ENCODE measurements at regions of chrX and their contacts with region 1.

Region 1: DNA sequence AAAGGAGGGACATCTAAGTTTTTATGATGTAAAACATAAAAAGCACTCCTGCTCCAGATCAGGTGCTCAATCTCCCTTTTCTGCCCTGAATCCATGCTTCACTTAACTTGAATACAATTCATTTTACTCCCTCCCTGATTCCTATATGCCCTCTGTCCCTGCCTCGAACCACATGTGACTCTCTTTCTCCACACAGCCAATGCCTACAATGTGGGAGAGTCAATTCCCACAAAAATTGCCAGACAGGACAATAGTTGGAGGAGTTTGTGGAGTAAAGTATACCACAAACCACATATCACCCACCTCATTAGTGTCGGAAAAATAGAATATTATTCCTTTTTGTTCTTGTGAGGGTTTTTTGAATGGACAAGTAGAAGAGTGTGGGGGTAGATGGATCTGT is 9.7 kb downstream of the AMMECR1 start:
- DNase-seq: no peak
- ATAC-seq: no peak
- H3K4me3 ChIP-seq: no peak overlapping the region
- H3K27ac ChIP-seq: no peak overlapping the region
- H3K4me1 ChIP-seq: peaks cover 8 to 21% of the 10 kb centered on the region in 2 experiments; a peak in 3 of 5 replicates
- H3K27me3 ChIP-seq: no peaks in the 10 kb centered on the region
- CTCF ChIP-seq: no peak
- EP300 ChIP-seq: no peak
- POLR2A ChIP-seq: no peak
- RAD21 ChIP-seq: no peak

Region 2: DNA sequence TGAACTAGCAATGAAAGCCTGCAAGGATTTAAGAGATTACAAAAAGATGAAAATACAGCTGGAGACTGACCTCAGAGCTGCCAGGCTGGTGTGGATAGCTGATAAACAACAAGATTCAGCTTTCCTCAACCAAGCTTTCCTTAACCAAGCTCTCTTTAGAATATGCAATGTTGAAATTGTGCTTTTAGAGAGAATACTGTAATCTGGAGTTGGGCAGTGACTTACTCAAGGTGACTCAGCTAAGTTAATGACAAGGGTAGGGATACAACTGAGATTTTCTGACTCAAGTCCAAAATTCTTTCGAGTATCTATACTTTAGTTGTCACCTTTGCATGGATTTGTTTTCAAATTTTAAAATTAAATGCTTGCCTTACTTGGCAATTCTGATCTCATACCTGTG is 88.3 kb before region 1 on chrX:
- CTCF ChIA-PET with region 1: no interaction called
- POLR2A ChIA-PET with region 1: no interaction called
- in situ Hi-C with region 1: loop called (anchors 5 kb)
- intact Hi-C with region 1: no loop called
- DNase-seq: peak in 1 of 4 experiments; percentile 11
- ATAC-seq: peak; percentile 69
- H3K4me3 ChIP-seq: no peak overlapping the region
- H3K27ac ChIP-seq: no peak overlapping the region
- H3K4me1 ChIP-seq: no peaks in the 10 kb centered on the region; a peak in 2 of 5 replicates
- H3K27me3 ChIP-seq: no peaks in the 10 kb centered on the region
- CTCF ChIP-seq: no peak
- EP300 ChIP-seq: no peak
- POLR2A ChIP-seq: no peak
- RAD21 ChIP-seq: no peak

Region 3: GRCh38 chrX:110286136-110286535 is 22.1 kb before region 1 on chrX:
- CTCF ChIA-PET with region 1: no interaction called
- POLR2A ChIA-PET with region 1: no interaction called
- in situ Hi-C with region 1: no loop called
- intact Hi-C with region 1: no loop called
- DNase-seq: no peak
- ATAC-seq: no peak
- H3K4me3 ChIP-seq: no peak overlapping the region
- H3K27ac ChIP-seq: no peak overlapping the region
- H3K4me1 ChIP-seq: peaks cover 0 to 8% of the 10 kb centered on the region in 2 experiments; a peak in 2 of 5 replicates
- H3K27me3 ChIP-seq: no peaks in the 10 kb centered on the region
- CTCF ChIP-seq: no peak
- EP300 ChIP-seq: no peak
- POLR2A ChIP-seq: no peak
- RAD21 ChIP-seq: no peak

Measured in K562 (cell line).